Mammary epithelial cell (primary cell): ENCODE measurements at regions of chr1 and their contacts with region 1.

Region 1: DNA sequence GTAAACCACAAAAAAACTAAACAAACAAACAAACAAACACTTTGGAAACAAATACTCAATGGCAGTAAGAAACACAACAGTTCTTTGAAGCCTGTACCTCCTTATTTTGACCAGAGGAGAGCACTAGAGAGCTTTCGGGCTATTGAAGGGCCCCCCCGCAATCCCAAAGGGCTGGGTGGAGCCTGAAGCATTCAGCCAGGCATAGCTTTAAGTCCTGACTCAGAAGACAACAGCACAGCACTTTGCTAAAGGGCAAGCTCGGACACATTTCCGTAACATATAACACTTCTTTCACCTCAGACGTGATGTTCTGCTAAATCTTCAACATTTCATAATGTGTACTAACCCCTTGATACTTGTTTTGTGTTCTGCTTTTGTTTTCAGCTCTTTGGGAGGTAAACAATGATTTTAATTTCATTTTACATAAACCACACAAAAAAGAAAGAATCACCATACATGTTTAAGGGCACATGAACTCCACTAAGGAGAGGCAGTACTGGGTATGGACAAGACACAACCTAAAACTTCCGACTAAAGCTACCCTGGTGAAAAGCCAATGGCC is 9.7 kb upstream of the SHCBP1L start:
- DNase-seq: peak; percentile 88
- H3K4me3 ChIP-seq: no peak overlapping the region
- H3K27ac ChIP-seq: peak overlapping the region; percentile 74
- H3K4me1 ChIP-seq: peaks cover 7% of the 10 kb centered on the region
- H3K27me3 ChIP-seq: no peaks in the 10 kb centered on the region
- CTCF ChIP-seq: peak; percentile 95 to 96

Region 2: DNA sequence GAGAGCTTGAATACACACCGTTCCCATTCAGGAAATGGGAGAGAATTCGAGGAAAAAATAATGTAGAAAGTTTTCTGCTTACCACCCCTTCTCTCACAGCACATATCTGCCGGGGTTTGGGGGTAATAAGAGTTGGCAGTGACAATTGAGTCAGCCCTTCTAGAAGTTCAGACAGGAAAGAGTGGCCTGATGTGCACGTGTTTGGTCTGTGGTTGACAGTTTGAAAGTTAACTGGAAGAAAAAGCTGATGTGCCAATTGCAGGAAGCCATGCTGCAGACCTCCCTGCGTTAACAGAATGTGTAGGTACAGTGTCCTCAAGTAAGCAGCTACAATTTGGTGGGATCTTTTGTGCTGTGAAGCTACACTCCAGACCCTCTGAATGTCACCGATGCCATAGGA is 72.6 kb before region 1 on chr1:
- CTCF ChIA-PET with region 1: no interaction called
- dilution Hi-C with region 1: no loop called
- in situ Hi-C with region 1: no loop called
- intact Hi-C with region 1: no loop called
- DNase-seq: no peak
- H3K4me3 ChIP-seq: no peak overlapping the region
- H3K27ac ChIP-seq: no peak overlapping the region
- H3K4me1 ChIP-seq: no peaks in the 10 kb centered on the region
- H3K27me3 ChIP-seq: no peaks in the 10 kb centered on the region
- CTCF ChIP-seq: no peak

Region 3: DNA sequence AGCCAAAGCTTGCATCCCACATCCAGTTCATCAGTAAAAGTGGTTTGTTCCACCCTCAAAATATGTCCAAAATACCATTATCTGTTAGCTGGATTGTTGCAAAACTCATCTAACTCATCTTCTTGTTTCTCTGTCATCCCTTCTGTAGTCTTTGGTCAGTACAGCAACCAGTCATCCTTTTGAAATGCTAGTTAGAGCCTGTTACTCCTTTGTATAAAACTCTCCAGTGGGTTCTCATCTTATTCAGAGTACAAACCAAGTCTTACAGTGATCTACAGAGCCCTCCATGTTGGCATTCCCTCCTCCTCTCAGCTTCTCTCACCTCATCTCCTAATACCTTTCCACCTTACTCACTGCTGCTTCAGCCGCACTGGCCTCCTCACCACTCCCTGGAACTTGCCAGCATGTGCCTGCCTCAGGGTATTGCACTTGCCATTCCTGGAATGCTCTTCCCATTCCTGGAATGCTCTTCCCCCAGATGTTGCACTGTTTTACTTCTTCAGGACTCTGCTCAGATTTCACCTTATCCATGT is 131.2 kb after region 1 on chr1:
- CTCF ChIA-PET with region 1: no interaction called
- dilution Hi-C with region 1: no loop called
- in situ Hi-C with region 1: no loop called
- intact Hi-C with region 1: loop called (anchors 1 kb)
- DNase-seq: peak; percentile 78
- H3K4me3 ChIP-seq: no peak overlapping the region
- H3K27ac ChIP-seq: peak overlapping the region; percentile 26
- H3K4me1 ChIP-seq: peaks cover 41% of the 10 kb centered on the region
- H3K27me3 ChIP-seq: no peaks in the 10 kb centered on the region
- CTCF ChIP-seq: peak in 1 of 2 donors; percentile 2

Region 4: GRCh38 chr1:183139281-183139942 is 176.8 kb after region 1 on chr1:
- CTCF ChIA-PET with region 1: no interaction called
- dilution Hi-C with region 1: no loop called
- in situ Hi-C with region 1: no loop called
- intact Hi-C with region 1: loop called (anchors 1 kb)
- DNase-seq: peak; percentile 84
- H3K4me3 ChIP-seq: no peak overlapping the region
- H3K27ac ChIP-seq: peak overlapping the region; percentile 79
- H3K4me1 ChIP-seq: peaks cover 30% of the 10 kb centered on the region
- H3K27me3 ChIP-seq: no peaks in the 10 kb centered on the region
- CTCF ChIP-seq: no peak

Region 5: GRCh38 chr1:183209533-183210158 is 247.0 kb after region 1 on chr1:
- CTCF ChIA-PET with region 1: no interaction called
- dilution Hi-C with region 1: no loop called
- in situ Hi-C with region 1: no loop called
- intact Hi-C with region 1: loop called (anchors 5 kb)
- DNase-seq: peak; percentile 87
- H3K4me3 ChIP-seq: no peak overlapping the region
- H3K27ac ChIP-seq: peak overlapping the region; percentile 63
- H3K4me1 ChIP-seq: peaks cover 43% of the 10 kb centered on the region
- H3K27me3 ChIP-seq: no peaks in the 10 kb centered on the region
- CTCF ChIP-seq: no peak

Region 6: DNA sequence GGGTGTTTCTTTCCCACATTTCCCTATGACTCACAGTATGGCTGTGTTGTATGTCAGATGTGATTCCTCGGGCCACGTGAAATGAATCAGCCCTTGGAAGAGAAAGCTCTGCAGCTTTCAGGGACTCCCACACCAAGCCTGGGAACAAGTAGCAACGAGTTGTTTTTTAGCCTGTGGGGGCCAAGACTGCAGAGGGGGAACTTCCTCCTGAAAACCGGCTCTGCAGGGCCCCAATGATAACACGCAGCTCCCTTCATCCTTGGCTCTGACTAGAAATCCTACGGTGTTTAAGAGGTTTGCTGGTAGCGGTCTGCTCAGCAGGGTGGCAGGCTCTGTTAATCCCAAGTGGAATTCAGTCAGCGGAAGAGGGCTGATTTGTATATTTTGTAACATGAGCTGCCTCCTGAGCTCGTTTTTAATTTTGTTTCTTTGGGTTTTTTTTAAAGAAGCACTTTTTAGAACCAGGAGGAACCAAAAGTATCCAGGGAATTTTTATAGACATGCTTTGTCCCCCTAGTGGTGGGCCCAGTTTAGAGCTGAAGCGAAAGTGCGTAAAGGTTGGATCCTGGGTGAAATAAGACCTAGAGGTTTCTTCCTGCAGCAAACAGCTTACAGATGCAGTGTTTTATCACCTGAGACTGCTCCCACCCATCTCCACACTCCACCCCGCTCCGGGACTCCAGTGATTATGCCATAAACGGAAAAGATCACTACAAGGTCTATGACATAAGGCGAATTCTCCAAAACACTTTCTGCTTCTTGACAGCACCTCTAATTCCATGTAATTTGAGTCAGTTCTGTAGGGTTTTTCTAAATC is 272.2 kb after region 1 on chr1:
- CTCF ChIA-PET with region 1: no interaction called
- dilution Hi-C with region 1: no loop called
- in situ Hi-C with region 1: no loop called
- intact Hi-C with region 1: loop called (anchors 1 kb)
- DNase-seq: peak; percentile 99
- H3K4me3 ChIP-seq: no peak overlapping the region
- H3K27ac ChIP-seq: peak overlapping the region; percentile 75
- H3K4me1 ChIP-seq: peaks cover 81% of the 10 kb centered on the region
- H3K27me3 ChIP-seq: no peaks in the 10 kb centered on the region
- CTCF ChIP-seq: peak; percentile 49 to 66

Region 7: GRCh38 chr1:183318433-183318832 is 355.8 kb after region 1 on chr1:
- CTCF ChIA-PET with region 1: no interaction called
- dilution Hi-C with region 1: no loop called
- in situ Hi-C with region 1: no loop called
- intact Hi-C with region 1: loop called (anchors 1 kb)
- DNase-seq: peak; percentile 88
- H3K4me3 ChIP-seq: no peak overlapping the region
- H3K27ac ChIP-seq: no peak overlapping the region
- H3K4me1 ChIP-seq: peaks cover 25% of the 10 kb centered on the region
- H3K27me3 ChIP-seq: no peaks in the 10 kb centered on the region
- CTCF ChIP-seq: peak; percentile 60 to 87

Region 8: GRCh38 chr1:183622884-183623785 is 660.5 kb after region 1 on chr1:
- CTCF ChIA-PET with region 1: no interaction called
- dilution Hi-C with region 1: no loop called
- in situ Hi-C with region 1: no loop called
- intact Hi-C with region 1: loop called (anchors 2 kb)
- DNase-seq: peak; percentile 62
- H3K4me3 ChIP-seq: no peak overlapping the region
- H3K27ac ChIP-seq: no peak overlapping the region
- H3K4me1 ChIP-seq: peaks cover 26% of the 10 kb centered on the region
- H3K27me3 ChIP-seq: no peaks in the 10 kb centered on the region
- CTCF ChIP-seq: peak; percentile 81 to 84